HepG2 (cell line): ENCODE measurements at regions of chr16 and their contacts with region 1.

Region 1: DNA sequence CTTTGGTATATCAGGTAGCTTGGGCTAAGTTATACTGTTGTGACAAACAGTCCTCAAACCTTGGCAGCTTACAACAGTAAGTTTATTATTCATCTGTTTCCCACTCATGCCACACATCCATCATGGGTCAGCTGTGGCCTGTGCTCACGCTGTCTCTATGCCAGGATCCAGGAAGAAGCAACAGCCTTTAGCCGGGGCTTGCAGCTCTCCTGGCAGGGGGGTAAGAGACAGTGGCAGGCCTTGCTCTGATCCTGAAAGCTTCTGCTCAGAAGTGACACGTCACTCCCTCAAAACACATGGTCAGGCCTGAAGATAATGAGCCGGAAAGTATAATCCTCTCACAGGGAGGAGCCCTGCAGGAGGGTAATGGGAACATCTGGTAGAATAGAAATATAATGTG is 377.6 kb downstream of the CPPED1 start:
- DNase-seq: no peak
- ATAC-seq: no peak
- H3K4me3 ChIP-seq: no peak overlapping the region
- H3K27ac ChIP-seq: no peak overlapping the region
- H3K4me1 ChIP-seq: peaks cover 45% of the 10 kb centered on the region
- H3K27me3 ChIP-seq: no peaks in the 10 kb centered on the region
- CTCF ChIP-seq: no peak
- EP300 ChIP-seq: no peak
- POLR2A ChIP-seq: no peak
- RAD21 ChIP-seq: no peak

Region 2: DNA sequence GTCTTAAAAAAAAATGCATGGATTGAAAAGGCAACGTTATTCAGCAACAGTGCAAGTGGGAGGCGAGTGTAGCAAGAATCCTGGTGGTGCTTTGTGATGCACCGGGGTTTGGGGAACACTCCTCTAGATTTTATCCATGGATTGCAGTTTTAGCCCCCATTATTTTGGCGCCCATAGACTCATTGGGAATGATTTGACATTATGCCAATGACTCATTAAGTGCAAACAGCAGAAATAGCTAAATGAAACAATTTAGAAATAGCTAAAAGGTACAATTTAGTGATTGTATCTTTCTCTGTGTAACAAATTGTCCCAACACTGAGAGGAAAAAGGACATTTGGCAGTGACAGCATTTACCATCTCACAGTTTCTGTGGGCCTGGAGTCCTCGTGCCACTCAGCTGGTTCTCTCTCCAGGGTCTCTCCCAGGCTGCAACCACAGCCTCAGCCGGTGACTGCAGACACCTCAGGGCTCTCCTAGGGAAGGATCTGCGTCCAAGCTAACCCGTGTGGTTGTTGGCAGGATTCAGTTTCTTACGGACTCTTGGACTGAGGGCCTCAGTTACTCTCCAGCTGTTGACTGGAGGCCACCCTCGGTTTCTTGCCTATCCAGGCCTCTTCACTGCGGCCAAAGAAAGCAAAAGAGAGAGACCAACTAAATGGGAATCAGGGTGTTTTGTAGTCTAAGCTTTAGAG is 50.9 kb before region 1 on chr16:
- CTCF ChIA-PET with region 1: no interaction called
- POLR2A ChIA-PET with region 1: no interaction called
- in situ Hi-C with region 1: no loop called
- intact Hi-C with region 1: no loop called
- DNase-seq: no peak
- ATAC-seq: no peak
- H3K4me3 ChIP-seq: no peak overlapping the region
- H3K27ac ChIP-seq: no peak overlapping the region
- H3K4me1 ChIP-seq: peaks cover 15% of the 10 kb centered on the region
- H3K27me3 ChIP-seq: no peaks in the 10 kb centered on the region
- CTCF ChIP-seq: no peak
- EP300 ChIP-seq: no peak
- POLR2A ChIP-seq: no peak
- RAD21 ChIP-seq: no peak

Region 3: GRCh38 chr16:12406926-12407690 is 19.0 kb before region 1 on chr16:
- CTCF ChIA-PET with region 1: no interaction called
- POLR2A ChIA-PET with region 1: interaction called, 11 read pairs
- in situ Hi-C with region 1: no loop called
- intact Hi-C with region 1: no loop called
- DNase-seq: peak; percentile 84
- ATAC-seq: peak; percentile 71
- H3K4me3 ChIP-seq: no peak overlapping the region
- H3K27ac ChIP-seq: peak overlapping the region; percentile 55
- H3K4me1 ChIP-seq: peaks cover 21% of the 10 kb centered on the region
- H3K27me3 ChIP-seq: no peaks in the 10 kb centered on the region
- CTCF ChIP-seq: no peak
- EP300 ChIP-seq: no peak; a peak in 1 of 4 replicates
- POLR2A ChIP-seq: no peak
- RAD21 ChIP-seq: no peak